ENCODE measurements at regions of chr11 and their contacts with region 1.

Region 1: DNA sequence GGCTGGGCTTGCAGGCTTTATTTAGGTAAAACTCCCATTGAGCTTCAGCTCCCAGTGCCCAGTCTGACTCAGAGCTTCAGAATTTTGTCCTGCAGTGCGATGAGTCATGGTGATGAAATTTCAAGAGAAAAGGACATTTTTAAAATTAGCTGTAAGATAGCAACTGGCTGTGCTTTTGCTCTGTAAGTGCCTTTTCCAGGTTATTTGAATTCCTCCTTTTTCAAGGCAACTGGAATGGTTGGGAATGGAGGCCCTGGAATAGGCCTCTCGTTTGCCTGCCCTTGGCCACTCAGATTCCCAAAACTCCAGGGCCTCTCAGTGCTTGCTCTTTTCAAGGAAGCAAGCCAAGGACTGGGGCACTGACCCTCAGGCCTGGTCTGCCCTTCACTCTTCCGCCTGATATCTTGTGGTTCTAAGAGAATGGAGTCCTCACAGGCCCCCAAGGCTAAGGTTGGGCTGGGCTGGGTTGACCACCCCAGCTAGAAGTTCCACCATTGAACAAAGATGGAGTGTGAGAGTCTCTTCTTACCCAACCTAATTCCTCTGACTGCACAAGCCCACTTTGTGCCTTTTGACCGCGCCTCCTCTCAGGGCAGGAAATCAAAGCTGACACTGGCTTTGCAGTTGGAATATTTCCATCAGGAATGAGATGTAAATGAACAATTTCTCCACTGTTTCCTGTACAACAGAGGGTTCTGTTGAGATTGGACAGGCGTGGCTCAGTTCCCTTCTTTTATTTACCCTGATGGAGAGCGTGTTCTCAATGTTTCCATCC is 59.4 kb upstream of the PRSS23 start:
- DNase-seq: peak; percentile 55
- H3K4me3 Mint-ChIP-seq: no peak overlapping the region
- H3K27ac Mint-ChIP-seq: peak overlapping the region; percentile 57
- H3K4me1 Mint-ChIP-seq: peaks cover 27% of the 10 kb centered on the region
- H3K27me3 Mint-ChIP-seq: no peaks in the 10 kb centered on the region

Region 2: DNA sequence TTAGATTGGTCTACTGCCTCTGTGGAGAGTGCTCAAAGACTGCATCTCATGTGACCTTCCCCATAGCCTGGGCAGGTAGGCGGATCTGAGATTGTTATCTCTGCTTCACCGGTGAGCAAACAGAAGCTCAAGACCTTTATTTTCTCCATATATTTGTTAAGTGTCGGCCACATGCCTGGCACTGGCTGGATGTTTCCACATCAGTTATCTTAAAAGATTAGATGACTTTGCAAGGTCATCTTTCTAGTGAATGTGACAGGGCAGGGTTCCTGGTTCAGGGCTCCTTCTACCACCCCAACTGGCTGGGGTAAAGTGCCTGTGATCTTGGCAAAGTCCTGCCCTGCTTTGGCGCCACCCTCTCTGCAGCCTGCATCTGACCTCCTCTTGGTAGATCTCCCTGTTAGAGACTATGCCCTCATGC is 241.2 kb before region 1 on chr11:
- intact Hi-C with region 1: loop called (anchors 5 kb)
- DNase-seq: no peak
- H3K4me3 Mint-ChIP-seq: no peak overlapping the region
- H3K27ac Mint-ChIP-seq: no peak overlapping the region
- H3K4me1 Mint-ChIP-seq: peaks cover 6% of the 10 kb centered on the region
- H3K27me3 Mint-ChIP-seq: peaks cover 5% of the 10 kb centered on the region

Region 3: GRCh38 chr11:86523738-86524619 is 216.9 kb before region 1 on chr11:
- intact Hi-C with region 1: loop called (anchors 5 kb)
- DNase-seq: no peak
- H3K4me3 Mint-ChIP-seq: peak overlapping the region; percentile 35
- H3K27ac Mint-ChIP-seq: peak overlapping the region; percentile 88
- H3K4me1 Mint-ChIP-seq: peaks cover 28% of the 10 kb centered on the region
- H3K27me3 Mint-ChIP-seq: no peaks in the 10 kb centered on the region

Region 4: GRCh38 chr11:86637988-86638387 is 102.9 kb before region 1 on chr11:
- intact Hi-C with region 1: loop called (anchors 5 kb)
- DNase-seq: peak; percentile 77
- H3K4me3 Mint-ChIP-seq: no peak overlapping the region
- H3K27ac Mint-ChIP-seq: peak overlapping the region; percentile 42
- H3K4me1 Mint-ChIP-seq: peaks cover 30% of the 10 kb centered on the region
- H3K27me3 Mint-ChIP-seq: peaks cover 31% of the 10 kb centered on the region

Region 5: GRCh38 chr11:86688398-86689179 is 52.3 kb before region 1 on chr11:
- intact Hi-C with region 1: loop called (anchors 1 kb)
- DNase-seq: peak; percentile 63
- H3K4me3 Mint-ChIP-seq: peak overlapping the region; percentile 43
- H3K27ac Mint-ChIP-seq: peak overlapping the region; percentile 87
- H3K4me1 Mint-ChIP-seq: peaks cover 16% of the 10 kb centered on the region
- H3K27me3 Mint-ChIP-seq: no peaks in the 10 kb centered on the region